ENCODE measurements at regions of chr3 and their contacts with region 1.

Region 1: DNA sequence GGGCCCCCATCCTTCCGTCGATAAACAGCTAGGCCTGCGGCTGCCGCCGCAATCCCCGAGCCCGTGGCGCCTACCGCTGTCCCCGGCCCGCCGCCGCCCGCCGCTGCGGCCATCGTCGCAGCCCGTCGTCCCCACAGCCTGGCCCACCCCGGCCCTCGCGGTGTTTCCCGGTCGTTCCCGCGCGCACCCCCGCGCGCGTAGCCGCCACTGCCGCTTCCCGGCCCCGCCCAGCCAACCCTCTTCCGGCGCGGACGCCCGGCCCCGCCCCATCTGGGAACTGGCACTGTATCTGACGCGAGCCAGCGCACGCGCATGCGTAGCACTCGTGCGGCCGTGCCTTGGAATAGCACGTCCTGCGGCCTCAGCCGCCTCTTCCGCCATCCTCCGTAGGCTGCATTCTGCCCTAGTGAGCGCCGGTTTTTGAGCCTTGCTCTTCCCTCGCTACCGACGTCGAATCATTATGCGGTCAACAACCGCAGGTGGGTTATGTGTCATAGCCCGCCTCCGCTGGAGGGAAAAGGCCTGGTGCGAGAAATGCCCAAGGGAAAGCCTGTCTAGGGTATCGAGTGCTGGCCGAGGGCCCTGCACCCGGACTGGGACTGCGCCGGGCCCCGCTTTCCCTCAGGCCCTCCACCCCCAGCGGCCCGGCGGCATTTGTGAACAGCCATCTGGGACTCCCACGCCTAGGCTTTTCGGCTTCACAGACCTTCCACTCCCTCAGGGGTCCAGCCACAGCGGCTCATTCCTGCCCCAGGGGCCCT is at the start of gene SMARCC1:
- DNase-seq: peak; percentile 99
- ATAC-seq: peak; percentile 93
- H3K4me3 Mint-ChIP-seq: peak within 1 kb of the TSS; percentile 99
- H3K27ac Mint-ChIP-seq: peak within 1 kb of the TSS; percentile 97
- H3K4me1 Mint-ChIP-seq: peaks cover 21% of the 10 kb centered on the region
- H3K27me3 Mint-ChIP-seq: no peaks in the 10 kb centered on the region
- total RNA-seq, gene SMARCC1: 129 to 130 TPM

Region 2: DNA sequence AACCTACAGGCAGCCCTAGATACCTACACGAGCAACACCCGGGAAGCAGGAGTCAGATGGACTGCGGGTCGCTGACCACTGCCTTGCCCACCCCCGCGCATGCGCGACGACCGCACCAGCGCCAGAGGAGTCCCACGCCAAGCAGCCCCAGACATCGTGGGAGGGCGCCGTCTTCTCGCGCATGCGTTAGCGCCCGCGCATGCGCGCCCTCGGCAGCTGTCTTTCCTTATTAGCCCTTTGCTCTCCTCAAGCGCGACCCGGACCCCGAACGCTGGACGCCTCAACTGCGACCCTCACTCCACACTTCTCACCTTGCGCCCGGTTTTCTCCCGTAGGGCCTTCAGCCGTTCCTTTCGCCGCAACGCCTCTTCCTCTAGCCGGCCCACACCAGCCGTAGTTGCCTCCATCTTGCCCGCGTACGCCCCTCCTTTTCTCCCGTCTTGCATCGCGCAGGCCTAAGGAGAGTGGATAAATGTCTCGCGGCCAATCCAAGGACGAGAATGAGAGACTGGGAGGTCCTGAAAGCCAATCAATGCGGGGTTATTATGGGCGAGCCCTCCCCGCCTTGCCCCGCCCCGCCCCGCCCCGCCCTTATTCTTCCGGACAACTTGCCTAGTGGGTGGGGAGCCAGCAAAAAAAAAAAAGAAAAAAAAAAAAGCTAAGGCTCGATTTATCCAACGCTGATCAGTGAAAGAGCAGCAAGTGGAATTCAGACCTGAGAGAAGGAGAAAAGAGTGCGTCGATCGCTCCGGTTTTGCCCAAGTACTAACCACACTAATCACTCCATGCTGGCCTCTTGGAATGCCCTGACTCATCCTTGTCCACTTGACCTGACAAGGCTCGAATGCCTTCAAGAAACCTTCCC is 805.3 kb before region 1 on chr3 and contains the start of gene CCDC12:
- CTCF ChIA-PET with region 1: no interaction called
- POLR2A ChIA-PET with region 1: no interaction called
- intact Hi-C with region 1: loop called in 1 of 2 experiments (anchors 5 kb)
- DNase-seq: peak; percentile 96
- ATAC-seq: peak; percentile 82
- H3K4me3 Mint-ChIP-seq: peak within 1 kb of the TSS; percentile 92
- H3K27ac Mint-ChIP-seq: peak within 1 kb of the TSS; percentile 99
- H3K4me1 Mint-ChIP-seq: peaks cover 66% of the 10 kb centered on the region
- H3K27me3 Mint-ChIP-seq: no peaks in the 10 kb centered on the region
- total RNA-seq, gene CCDC12: 45.4 to 47.8 TPM

Region 3: GRCh38 chr3:47380601-47381316 is 401.1 kb before region 1 on chr3 and contains the start of gene PTPN23:
- CTCF ChIA-PET with region 1: no interaction called
- POLR2A ChIA-PET with region 1: no interaction called
- intact Hi-C with region 1: loop called in 1 of 2 experiments (anchors 1 kb)
- DNase-seq: peak; percentile 99
- ATAC-seq: peak; percentile 81
- H3K4me3 Mint-ChIP-seq: peak within 1 kb of the TSS; percentile 86
- H3K27ac Mint-ChIP-seq: peak within 1 kb of the TSS; percentile 99
- H3K4me1 Mint-ChIP-seq: peaks cover 39% of the 10 kb centered on the region
- H3K27me3 Mint-ChIP-seq: no peaks in the 10 kb centered on the region
- total RNA-seq, gene PTPN23: 25.9 to 29.4 TPM

Region 4: GRCh38 chr3:47513125-47513929 is 268.5 kb before region 1 on chr3 and contains the start of gene ELP6:
- CTCF ChIA-PET with region 1: no interaction called
- POLR2A ChIA-PET with region 1: no interaction called
- intact Hi-C with region 1: loop called in 1 of 2 experiments (anchors 1 kb)
- DNase-seq: peak; percentile 99
- ATAC-seq: peak; percentile 97
- H3K4me3 Mint-ChIP-seq: peak within 1 kb of the TSS; percentile 91
- H3K27ac Mint-ChIP-seq: peak within 1 kb of the TSS; percentile 96
- H3K4me1 Mint-ChIP-seq: peaks cover 20% of the 10 kb centered on the region
- H3K27me3 Mint-ChIP-seq: no peaks in the 10 kb centered on the region
- total RNA-seq, gene ELP6: 27.8 to 40.3 TPM

Region 5: DNA sequence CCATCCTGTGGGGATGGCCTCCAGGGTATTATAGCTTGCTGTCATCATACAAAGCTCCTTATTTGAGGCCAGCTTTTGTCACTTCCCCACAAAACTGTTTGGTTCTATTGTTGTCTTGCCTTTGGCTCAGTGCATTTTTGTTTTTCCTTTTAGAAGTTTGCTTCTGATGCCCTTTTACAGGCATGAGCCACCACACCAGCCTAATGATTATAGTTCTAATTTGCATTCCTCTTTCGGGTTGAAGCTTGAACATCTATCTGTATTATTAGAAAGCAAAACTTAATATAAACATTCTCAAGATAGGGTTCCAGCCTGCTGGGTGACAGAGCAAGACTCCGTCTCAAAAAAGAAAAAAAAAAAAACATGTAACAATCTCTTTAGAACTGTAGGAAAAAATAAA is 39.9 kb before region 1 on chr3:
- CTCF ChIA-PET with region 1: no interaction called
- POLR2A ChIA-PET with region 1: no interaction called
- intact Hi-C with region 1: loop called in 1 of 2 experiments (anchors 5 kb)
- DNase-seq: no peak
- ATAC-seq: no peak
- H3K4me3 Mint-ChIP-seq: no peak overlapping the region
- H3K27ac Mint-ChIP-seq: no peak overlapping the region
- H3K4me1 Mint-ChIP-seq: peaks cover 13% of the 10 kb centered on the region
- H3K27me3 Mint-ChIP-seq: no peaks in the 10 kb centered on the region

Region 6: GRCh38 chr3:48188266-48189201 is 406.7 kb after region 1 on chr3 and contains the start of gene CDC25A:
- CTCF ChIA-PET with region 1: no interaction called
- POLR2A ChIA-PET with region 1: no interaction called
- intact Hi-C with region 1: loop called in 1 of 2 experiments (anchors 1 kb)
- DNase-seq: peak; percentile 98
- ATAC-seq: peak; percentile 99
- H3K4me3 Mint-ChIP-seq: peak within 1 kb of the TSS; percentile 96
- H3K27ac Mint-ChIP-seq: peak within 1 kb of the TSS; percentile 79
- H3K4me1 Mint-ChIP-seq: peaks cover 15% of the 10 kb centered on the region
- H3K27me3 Mint-ChIP-seq: peaks cover 7% of the 10 kb centered on the region
- total RNA-seq, gene CDC25A: 32.5 to 33.9 TPM

Region 7: DNA sequence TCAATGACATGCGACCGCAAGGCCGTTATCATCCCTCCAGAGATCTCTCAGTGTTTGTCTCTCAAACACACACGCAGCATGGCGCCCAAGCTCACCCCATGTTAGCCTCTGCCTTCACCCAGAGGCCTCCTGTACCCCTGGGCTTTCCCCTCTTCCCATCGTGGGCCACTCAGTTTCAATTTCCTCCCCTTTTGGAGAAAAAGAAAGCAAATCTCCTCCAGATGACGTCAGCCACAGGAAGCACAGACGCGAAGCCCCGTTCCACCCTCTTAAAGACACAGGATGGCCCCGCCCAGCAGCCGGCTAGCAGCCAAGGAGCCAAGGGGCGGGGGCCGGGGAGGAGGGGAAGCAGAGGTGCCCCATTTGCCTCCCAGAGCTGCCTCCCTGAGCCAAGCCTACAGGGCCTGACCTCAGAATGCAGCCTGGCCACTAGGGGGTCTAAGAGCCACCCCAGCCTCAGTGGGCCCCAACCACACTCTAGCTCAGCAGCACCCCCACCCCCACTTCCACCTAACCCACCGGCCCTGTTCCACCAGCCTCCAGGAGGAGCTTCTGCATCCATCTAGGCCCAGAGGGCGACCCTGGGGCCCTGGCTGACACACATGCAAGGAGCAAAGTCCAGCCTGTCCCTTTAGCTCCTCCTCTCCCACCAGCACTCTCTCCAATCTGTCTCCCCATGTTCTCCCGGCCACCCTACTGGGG is 691.2 kb after region 1 on chr3:
- CTCF ChIA-PET with region 1: no interaction called
- POLR2A ChIA-PET with region 1: interaction called, 3 read pairs
- intact Hi-C with region 1: loop called in 1 of 2 experiments (anchors 5 kb)
- DNase-seq: peak; percentile 99
- ATAC-seq: peak; percentile 90
- H3K4me3 Mint-ChIP-seq: peak overlapping the region; percentile 74
- H3K27ac Mint-ChIP-seq: peak overlapping the region; percentile 93
- H3K4me1 Mint-ChIP-seq: peaks cover 49% of the 10 kb centered on the region
- H3K27me3 Mint-ChIP-seq: no peaks in the 10 kb centered on the region

Region 8: DNA sequence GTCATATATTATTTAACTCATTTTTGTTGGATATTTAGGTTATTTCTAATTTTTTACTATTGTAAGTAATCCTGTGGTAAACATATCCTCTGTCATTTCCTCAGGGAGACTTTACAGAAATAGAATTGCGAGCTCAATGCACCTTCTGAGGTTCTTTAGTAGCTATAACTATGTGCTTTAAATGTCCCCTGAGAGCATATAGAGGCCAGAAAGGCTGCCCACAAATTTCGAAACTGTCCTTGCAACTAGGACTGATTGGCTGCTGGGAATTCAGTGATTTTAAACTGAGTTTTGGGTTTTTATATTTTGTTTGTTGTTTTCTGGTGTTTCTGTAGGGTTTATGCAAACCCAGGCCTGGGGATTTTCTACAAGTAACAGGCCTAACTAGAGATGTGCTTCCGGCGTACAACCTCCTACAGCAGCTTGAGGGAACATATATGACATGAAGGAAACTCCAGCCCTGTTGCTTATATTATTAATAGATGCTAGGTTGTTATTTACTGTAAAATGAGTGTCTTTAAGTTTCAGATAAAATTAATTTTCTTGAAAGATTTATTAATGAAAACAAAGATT is 1179.1 kb after region 1 on chr3:
- CTCF ChIA-PET with region 1: no interaction called
- POLR2A ChIA-PET with region 1: no interaction called
- intact Hi-C with region 1: no loop called
- DNase-seq: no peak
- ATAC-seq: no peak
- H3K4me3 Mint-ChIP-seq: no peak overlapping the region
- H3K27ac Mint-ChIP-seq: no peak overlapping the region
- H3K4me1 Mint-ChIP-seq: peaks cover 3% of the 10 kb centered on the region
- H3K27me3 Mint-ChIP-seq: no peaks in the 10 kb centered on the region

Measured in activated CD4-positive, alpha-beta T cell treated with anti-CD3 and anti-CD28 coated beads for 36 hours (primary cell).